Heart right ventricle (tissue), 16 donors: ENCODE measurements at regions of chr21 and their contacts with region 1.

Region 1: DNA sequence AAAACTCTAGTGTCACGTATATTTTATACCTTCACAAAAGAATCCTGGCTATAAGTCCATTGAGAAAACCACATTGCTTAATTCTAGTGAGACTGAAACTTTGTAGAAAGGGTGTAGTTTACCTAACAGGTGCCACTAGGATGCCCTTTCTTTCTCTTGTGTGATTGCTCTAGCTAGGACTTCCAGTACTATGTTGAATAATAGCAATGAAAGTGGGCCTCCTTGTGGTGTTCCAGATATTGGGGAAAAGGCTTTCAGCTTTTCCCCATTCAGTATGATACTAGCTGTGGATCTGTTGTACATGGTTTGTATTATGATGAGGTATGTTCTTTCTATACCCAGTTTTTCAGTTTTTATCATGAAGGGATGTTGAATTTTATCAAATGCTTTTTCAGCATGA is 39.7 kb upstream of the CHODL start:
- DNase-seq: no peak
- ATAC-seq: no peak
- H3K4me3 ChIP-seq: no peak overlapping the region
- H3K27ac ChIP-seq: no peak overlapping the region
- H3K4me1 ChIP-seq: no peaks in the 10 kb centered on the region
- H3K27me3 ChIP-seq: no peaks in the 10 kb centered on the region
- CTCF ChIP-seq: peak in 5 of 9 donors; percentile 12 to 49 (median 22)

Region 2: GRCh38 chr21:17925000-17925610 is 279.8 kb before region 1 on chr21:
- intact Hi-C with region 1: loop called in 1 of 10 experiments (anchors 10 kb)
- DNase-seq: peak in 1 of 2 donors; percentile 63
- ATAC-seq: peak; percentile 63 to 93 (median 84)
- H3K4me3 ChIP-seq: no peak overlapping the region
- H3K27ac ChIP-seq: no peak overlapping the region
- H3K4me1 ChIP-seq: peaks cover 0 to 11% (median 0%) of the 10 kb centered on the region in 9 donors
- H3K27me3 ChIP-seq: no peaks in the 10 kb centered on the region
- CTCF ChIP-seq: peak; percentile 69 to 92 (median 87)

Region 3: DNA sequence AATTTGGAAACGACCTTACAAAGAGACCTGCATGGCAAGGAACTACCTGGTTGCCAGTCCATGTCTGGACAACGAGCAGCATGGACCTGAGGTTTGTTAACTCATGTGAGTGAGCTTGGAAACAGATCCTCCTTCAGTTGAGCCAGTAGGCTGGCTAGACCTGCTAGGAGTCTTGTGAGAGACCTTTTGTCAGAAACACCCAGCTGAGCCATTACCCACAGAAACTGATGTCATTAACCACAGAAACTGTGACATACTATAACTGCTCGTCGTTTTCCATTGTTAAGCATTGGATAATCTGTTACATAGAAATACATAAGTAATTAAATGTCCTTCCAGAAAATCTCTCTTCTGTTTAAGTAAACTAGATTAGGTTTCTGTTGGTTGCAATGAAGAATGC is 174.7 kb before region 1 on chr21:
- intact Hi-C with region 1: no loop called
- DNase-seq: no peak
- ATAC-seq: no peak
- H3K4me3 ChIP-seq: no peak overlapping the region
- H3K27ac ChIP-seq: no peak overlapping the region
- H3K4me1 ChIP-seq: no peaks in the 10 kb centered on the region
- H3K27me3 ChIP-seq: no peaks in the 10 kb centered on the region
- CTCF ChIP-seq: no peak